Endothelial cell of umbilical vein (primary cell): ENCODE measurements at regions of chr6 and their contacts with region 1.

Region 1: GRCh38 chr6:88919032-88919431 is 44.4 kb downstream of the RNGTT start:
- DNase-seq: no peak
- H3K4me3 ChIP-seq: no peak overlapping the region
- H3K27ac ChIP-seq: no peak overlapping the region
- H3K4me1 ChIP-seq: no peaks in the 10 kb centered on the region
- H3K27me3 ChIP-seq: no peaks in the 10 kb centered on the region
- CTCF ChIP-seq: no peak
- POLR2A ChIP-seq: no peak

Region 2: GRCh38 chr6:88899569-88900316 is 19.3 kb before region 1 on chr6:
- CTCF ChIA-PET with region 1: interaction called, 19 read pairs
- POLR2A ChIA-PET with region 1: no interaction called
- dilution Hi-C with region 1: no loop called
- intact Hi-C with region 1: no loop called
- DNase-seq: no peak
- H3K4me3 ChIP-seq: no peak overlapping the region
- H3K27ac ChIP-seq: no peak overlapping the region
- H3K4me1 ChIP-seq: no peaks in the 10 kb centered on the region
- H3K27me3 ChIP-seq: no peaks in the 10 kb centered on the region
- CTCF ChIP-seq: peak in 1 of 2 donors; percentile 12
- POLR2A ChIP-seq: no peak

Region 3: GRCh38 chr6:88908598-88909548 is 10.2 kb before region 1 on chr6:
- CTCF ChIA-PET with region 1: interaction called, 15 read pairs
- POLR2A ChIA-PET with region 1: no interaction called
- dilution Hi-C with region 1: no loop called
- intact Hi-C with region 1: no loop called
- DNase-seq: no peak
- H3K4me3 ChIP-seq: no peak overlapping the region
- H3K27ac ChIP-seq: no peak overlapping the region
- H3K4me1 ChIP-seq: no peaks in the 10 kb centered on the region
- H3K27me3 ChIP-seq: no peaks in the 10 kb centered on the region
- CTCF ChIP-seq: no peak
- POLR2A ChIP-seq: no peak

Region 4: GRCh38 chr6:89098461-89098860 is 179.4 kb after region 1 on chr6:
- CTCF ChIA-PET with region 1: no interaction called
- POLR2A ChIA-PET with region 1: no interaction called
- dilution Hi-C with region 1: no loop called
- intact Hi-C with region 1: no loop called
- DNase-seq: no peak
- H3K4me3 ChIP-seq: no peak overlapping the region
- H3K27ac ChIP-seq: no peak overlapping the region
- H3K4me1 ChIP-seq: no peaks in the 10 kb centered on the region
- H3K27me3 ChIP-seq: no peaks in the 10 kb centered on the region
- CTCF ChIP-seq: no peak
- POLR2A ChIP-seq: no peak